Psoas muscle (tissue), 8 donors: ENCODE measurements at regions of chr17 and their contacts with region 1.

Region 1: DNA sequence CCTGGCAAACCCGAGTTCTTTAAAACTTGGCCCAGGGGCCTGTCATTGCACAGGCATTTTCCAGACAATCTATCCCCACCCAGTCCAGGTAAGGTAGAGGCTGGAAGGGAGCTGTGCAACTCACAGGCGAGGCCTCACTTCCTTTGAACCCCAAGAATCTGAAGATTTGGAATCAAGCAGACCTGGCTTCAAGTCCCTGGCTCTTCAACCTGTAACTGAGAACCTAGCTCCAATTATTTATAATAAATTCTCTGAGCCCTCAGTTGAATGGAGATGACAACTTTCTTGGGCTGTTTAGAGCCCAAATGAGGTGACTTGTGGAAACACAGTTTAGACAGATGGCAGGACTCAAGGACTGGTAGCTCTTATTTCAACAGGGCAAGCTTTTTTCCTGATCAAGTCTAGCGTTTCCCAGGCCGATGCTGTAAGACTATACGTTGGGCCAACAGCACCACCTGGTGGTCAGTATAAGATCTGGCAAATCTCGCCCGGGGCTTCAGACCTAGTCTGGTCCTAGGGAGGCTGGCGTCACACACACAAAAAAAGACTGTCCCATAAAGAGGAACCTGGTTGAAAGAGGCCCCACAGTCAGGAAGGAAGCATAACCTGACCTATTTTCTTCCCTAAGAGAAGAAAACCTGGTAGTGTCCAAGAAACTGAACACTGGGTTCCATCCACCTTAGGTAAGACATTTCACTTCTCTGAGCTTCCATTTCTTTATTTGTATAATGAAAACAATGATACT is 117.9 kb downstream of the C17orf67 start:
- DNase-seq: peak; percentile 77 to 82
- ATAC-seq: peak; percentile 87 to 99 (median 90)
- H3K4me3 ChIP-seq: no peak overlapping the region
- H3K27ac ChIP-seq: no peak overlapping the region
- H3K4me1 ChIP-seq: peaks cover 4% of the 10 kb centered on the region
- H3K27me3 ChIP-seq: no peaks in the 10 kb centered on the region
- CTCF ChIP-seq: peak; percentile 85

Region 2: GRCh38 chr17:55845385-55845784 is 870.4 kb before region 1 on chr17:
- intact Hi-C with region 1: loop called in 1 of 2 experiments (anchors 5 kb)
- DNase-seq: peak; percentile 64 to 81
- ATAC-seq: peak; percentile 63 to 88 (median 81)
- H3K4me3 ChIP-seq: peak overlapping the region; percentile 48
- H3K27ac ChIP-seq: no peak overlapping the region
- H3K4me1 ChIP-seq: no peaks in the 10 kb centered on the region
- H3K27me3 ChIP-seq: no peaks in the 10 kb centered on the region
- CTCF ChIP-seq: peak; percentile 53

Region 3: GRCh38 chr17:56592487-56593085 is 123.2 kb before region 1 on chr17:
- intact Hi-C with region 1: loop called (anchors 1 to 2 kb)
- DNase-seq: peak; percentile 68 to 79
- ATAC-seq: peak; percentile 76 to 82 (median 80)
- H3K4me3 ChIP-seq: peak overlapping the region; percentile 81
- H3K27ac ChIP-seq: no peak overlapping the region
- H3K4me1 ChIP-seq: peaks cover 22% of the 10 kb centered on the region
- H3K27me3 ChIP-seq: peaks cover 0 to 1% (median 0%) of the 10 kb centered on the region in 3 donors
- CTCF ChIP-seq: peak; percentile 100

Region 4: DNA sequence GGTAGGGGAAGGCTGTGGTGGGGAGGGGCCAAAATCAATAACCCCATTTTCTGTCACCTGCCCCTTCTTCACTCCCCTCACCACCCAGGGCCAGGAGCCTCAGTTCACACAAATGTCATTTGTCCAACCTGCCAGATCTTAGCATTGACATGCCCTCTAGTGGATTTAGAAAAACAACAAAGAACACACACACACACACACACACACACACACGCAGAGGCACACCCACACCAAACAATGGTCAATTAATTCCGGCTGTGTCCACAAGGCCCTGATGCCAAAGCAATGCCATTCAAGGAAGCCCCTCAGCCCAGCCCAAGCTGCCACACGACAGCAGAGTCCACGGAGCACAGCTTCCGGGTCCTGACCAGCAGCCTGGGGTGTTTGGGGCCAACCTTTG is 53.9 kb before region 1 on chr17:
- intact Hi-C with region 1: no loop called
- DNase-seq: no peak
- ATAC-seq: no peak
- H3K4me3 ChIP-seq: no peak overlapping the region
- H3K27ac ChIP-seq: no peak overlapping the region
- H3K4me1 ChIP-seq: peaks cover 8% of the 10 kb centered on the region
- H3K27me3 ChIP-seq: no peaks in the 10 kb centered on the region
- CTCF ChIP-seq: no peak

Region 5: GRCh38 chr17:56754523-56755208 is 38.9 kb after region 1 on chr17:
- intact Hi-C with region 1: no loop called
- DNase-seq: no peak
- ATAC-seq: no peak
- H3K4me3 ChIP-seq: no peak overlapping the region
- H3K27ac ChIP-seq: no peak overlapping the region
- H3K4me1 ChIP-seq: no peaks in the 10 kb centered on the region
- H3K27me3 ChIP-seq: no peaks in the 10 kb centered on the region
- CTCF ChIP-seq: no peak

Region 6: GRCh38 chr17:56779898-56780733 is 64.3 kb after region 1 on chr17:
- intact Hi-C with region 1: loop called in 1 of 2 experiments (anchors 5 kb)
- DNase-seq: peak; percentile 75 to 86
- ATAC-seq: peak; percentile 82 to 92 (median 86)
- H3K4me3 ChIP-seq: peak overlapping the region; percentile 53
- H3K27ac ChIP-seq: no peak overlapping the region
- H3K4me1 ChIP-seq: peaks cover 25% of the 10 kb centered on the region
- H3K27me3 ChIP-seq: no peaks in the 10 kb centered on the region
- CTCF ChIP-seq: peak; percentile 99

Region 7: GRCh38 chr17:56939901-56940343 is 224.1 kb after region 1 on chr17:
- intact Hi-C with region 1: no loop called
- DNase-seq: no peak
- ATAC-seq: peak; percentile 25 to 82 (median 62)
- H3K4me3 ChIP-seq: no peak overlapping the region
- H3K27ac ChIP-seq: no peak overlapping the region
- H3K4me1 ChIP-seq: no peaks in the 10 kb centered on the region
- H3K27me3 ChIP-seq: no peaks in the 10 kb centered on the region
- CTCF ChIP-seq: peak; percentile 68